PC-9 (cell line): ENCODE measurements at regions of chr9 and their contacts with region 1.

Region 1: GRCh38 chr9:14314929-14315645 is 1.1 kb upstream of the NFIB start:
- DNase-seq: peak; percentile 57 to 89
- H3K4me3 ChIP-seq: peak overlapping the region; percentile 76
- H3K27ac ChIP-seq: peak overlapping the region; percentile 96
- H3K4me1 ChIP-seq: peaks cover 31% of the 10 kb centered on the region
- H3K27me3 ChIP-seq: no peaks in the 10 kb centered on the region
- CTCF ChIP-seq: no peak

Region 2: GRCh38 chr9:13267743-13268142 is 1047.3 kb before region 1 on chr9:
- CTCF ChIA-PET with region 1: no interaction called
- POLR2A ChIA-PET with region 1: interaction called, 16 read pairs
- intact Hi-C with region 1: no loop called
- DNase-seq: peak in 1 of 2 experiments; percentile 61
- H3K4me3 ChIP-seq: no peak overlapping the region
- H3K27ac ChIP-seq: peak overlapping the region; percentile 14
- H3K4me1 ChIP-seq: peaks cover 11% of the 10 kb centered on the region; the same call in 1 of the 2 replicates
- H3K27me3 ChIP-seq: no peaks in the 10 kb centered on the region
- CTCF ChIP-seq: no peak

Region 3: GRCh38 chr9:14030375-14031059 is 284.6 kb before region 1 on chr9:
- CTCF ChIA-PET with region 1: interaction called, 3 read pairs
- POLR2A ChIA-PET with region 1: no interaction called
- intact Hi-C with region 1: loop called (anchors 5 kb)
- DNase-seq: peak; percentile 66 to 83
- H3K4me3 ChIP-seq: peak overlapping the region; percentile 31
- H3K27ac ChIP-seq: peak overlapping the region; percentile 66
- H3K4me1 ChIP-seq: peaks cover 32% of the 10 kb centered on the region
- H3K27me3 ChIP-seq: no peaks in the 10 kb centered on the region
- CTCF ChIP-seq: no peak

Region 4: GRCh38 chr9:14221558-14221957 is 93.5 kb before region 1 on chr9:
- CTCF ChIA-PET with region 1: no interaction called
- POLR2A ChIA-PET with region 1: interaction called, 11 read pairs
- intact Hi-C with region 1: loop called (anchors 5 kb)
- DNase-seq: peak; percentile 57 to 92
- H3K4me3 ChIP-seq: peak overlapping the region; percentile 23; the same call in 1 of the 2 replicates
- H3K27ac ChIP-seq: peak overlapping the region; percentile 95
- H3K4me1 ChIP-seq: peaks cover 19% of the 10 kb centered on the region
- H3K27me3 ChIP-seq: no peaks in the 10 kb centered on the region
- CTCF ChIP-seq: no peak

Region 5: DNA sequence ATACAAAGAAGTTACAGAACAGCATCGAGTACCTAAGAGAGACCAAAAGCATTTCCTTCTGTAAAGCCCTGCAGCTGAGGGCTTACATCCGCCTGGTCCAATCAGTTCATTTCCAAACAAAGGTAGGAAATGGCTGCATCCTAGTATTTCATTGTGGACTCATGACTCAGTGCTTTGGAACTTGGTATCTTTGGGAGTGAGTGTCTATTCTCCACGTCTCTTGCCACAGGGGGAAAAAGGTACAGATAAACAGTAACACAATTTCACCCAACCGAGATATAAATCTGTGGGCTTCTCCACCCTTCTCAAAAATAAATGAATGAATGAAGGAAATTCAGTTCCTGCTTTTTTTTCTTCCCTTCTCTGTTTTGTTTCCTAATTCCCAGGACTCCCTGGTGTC is 76.5 kb before region 1 on chr9:
- CTCF ChIA-PET with region 1: no interaction called
- POLR2A ChIA-PET with region 1: interaction called, 4 read pairs
- intact Hi-C with region 1: loop called (anchors 5 kb)
- DNase-seq: peak; percentile 50 to 93
- H3K4me3 ChIP-seq: peak overlapping the region; percentile 41; the same call in 1 of the 2 replicates
- H3K27ac ChIP-seq: peak overlapping the region; percentile 99
- H3K4me1 ChIP-seq: peaks cover 49% of the 10 kb centered on the region
- H3K27me3 ChIP-seq: no peaks in the 10 kb centered on the region
- CTCF ChIP-seq: no peak

Region 6: DNA sequence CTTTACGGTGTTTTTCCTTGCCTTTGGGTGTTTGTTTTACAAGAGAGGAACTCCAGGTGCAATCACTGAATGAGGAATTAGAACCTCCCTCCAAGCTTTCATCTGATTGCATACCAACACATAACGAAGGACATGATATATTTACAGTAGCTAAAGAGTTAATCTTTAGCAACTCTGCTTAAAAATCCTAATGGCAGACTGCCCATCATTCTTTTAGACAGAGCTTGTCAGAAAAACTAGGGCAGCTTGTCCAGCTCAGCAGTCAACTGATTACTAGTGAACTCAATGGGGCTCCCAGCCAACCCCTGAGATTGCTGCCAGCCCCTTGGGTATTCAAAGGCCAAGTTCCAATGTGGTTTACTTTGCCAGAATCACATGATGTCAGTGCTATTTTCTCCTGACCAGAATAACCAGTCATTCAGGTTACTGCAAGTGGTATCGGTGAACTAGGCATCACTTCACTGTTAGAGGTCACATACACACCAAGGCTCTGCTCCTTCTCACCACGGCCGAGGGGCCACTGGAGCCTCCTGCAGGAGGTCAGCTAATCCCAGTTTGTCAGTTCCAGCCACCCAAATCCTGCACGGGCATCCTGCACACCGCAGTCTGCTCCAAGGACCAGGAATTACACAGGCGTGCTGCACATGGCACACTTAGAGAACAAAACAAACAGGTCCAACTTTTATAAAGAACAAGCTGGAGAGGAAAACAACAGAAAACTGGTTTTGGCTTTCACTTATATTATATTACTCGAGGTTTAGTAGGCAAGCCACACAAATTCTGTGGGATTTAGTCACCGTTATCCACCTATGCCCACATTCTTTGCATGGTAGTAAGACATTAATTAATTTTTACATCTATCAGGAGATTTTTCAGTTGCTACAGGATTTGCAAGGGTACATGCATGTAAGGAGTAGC is 63.7 kb before region 1 on chr9:
- CTCF ChIA-PET with region 1: no interaction called
- POLR2A ChIA-PET with region 1: interaction called, 6 read pairs
- intact Hi-C with region 1: loop called (anchors 1 kb)
- DNase-seq: peak; percentile 81 to 96
- H3K4me3 ChIP-seq: peak overlapping the region; percentile 47; the same call in 1 of the 2 replicates
- H3K27ac ChIP-seq: peak overlapping the region; percentile 98
- H3K4me1 ChIP-seq: peaks cover 60% of the 10 kb centered on the region
- H3K27me3 ChIP-seq: no peaks in the 10 kb centered on the region
- CTCF ChIP-seq: no peak

Region 7: GRCh38 chr9:14277244-14277643 is 37.8 kb before region 1 on chr9:
- CTCF ChIA-PET with region 1: no interaction called
- POLR2A ChIA-PET with region 1: no interaction called
- intact Hi-C with region 1: no loop called
- DNase-seq: no peak
- H3K4me3 ChIP-seq: no peak overlapping the region
- H3K27ac ChIP-seq: no peak overlapping the region
- H3K4me1 ChIP-seq: no peaks in the 10 kb centered on the region
- H3K27me3 ChIP-seq: no peaks in the 10 kb centered on the region
- CTCF ChIP-seq: no peak

Region 8: DNA sequence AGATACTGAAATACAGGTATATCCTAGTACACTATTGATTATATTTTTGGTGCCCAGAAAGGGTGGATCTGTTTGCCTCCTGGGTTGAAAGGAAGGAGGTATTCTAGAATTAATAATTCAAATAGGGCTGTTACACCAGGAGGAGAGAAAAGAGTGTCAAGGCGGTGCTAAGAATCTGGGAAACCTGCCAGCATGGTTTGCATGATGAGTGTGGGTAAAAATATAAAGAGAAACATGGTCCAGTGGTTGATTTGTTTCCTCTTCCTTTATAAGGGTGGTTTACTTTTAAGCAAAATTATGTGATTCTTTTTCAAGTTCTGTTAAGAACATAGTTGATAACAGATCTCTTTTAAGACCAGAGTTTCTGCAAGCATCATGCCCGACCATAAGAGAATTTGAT is 68.2 kb after region 1 on chr9:
- CTCF ChIA-PET with region 1: no interaction called
- POLR2A ChIA-PET with region 1: no interaction called
- intact Hi-C with region 1: no loop called
- DNase-seq: no peak
- H3K4me3 ChIP-seq: no peak overlapping the region
- H3K27ac ChIP-seq: no peak overlapping the region
- H3K4me1 ChIP-seq: no peaks in the 10 kb centered on the region
- H3K27me3 ChIP-seq: no peaks in the 10 kb centered on the region
- CTCF ChIP-seq: no peak